Right ventricle myocardium inferior (tissue), 1 donor: ENCODE measurements at regions of chr12 and their contacts with region 1.

Region 1: DNA sequence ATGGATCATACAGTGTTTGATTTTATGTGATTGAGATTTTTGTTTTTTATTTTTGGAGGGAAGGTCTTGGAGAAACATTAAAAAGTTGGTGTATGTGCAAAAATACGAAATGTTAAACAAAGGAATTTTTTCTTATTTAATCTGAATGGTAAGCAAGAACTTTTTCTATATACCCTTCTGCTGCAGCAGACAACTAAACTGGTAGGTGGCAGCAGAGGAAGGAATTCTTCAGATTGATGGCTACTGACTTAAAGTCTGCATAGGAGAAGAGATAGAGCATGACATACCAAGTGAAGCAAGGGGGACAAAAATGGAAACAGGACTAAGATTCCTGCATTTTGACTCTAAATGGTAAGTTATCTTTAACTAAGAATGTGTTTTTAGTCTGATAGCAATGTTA is 42.0 kb upstream of the A2ML1 start:
- DNase-seq: no peak
- ATAC-seq: peak; percentile 54

Region 2: DNA sequence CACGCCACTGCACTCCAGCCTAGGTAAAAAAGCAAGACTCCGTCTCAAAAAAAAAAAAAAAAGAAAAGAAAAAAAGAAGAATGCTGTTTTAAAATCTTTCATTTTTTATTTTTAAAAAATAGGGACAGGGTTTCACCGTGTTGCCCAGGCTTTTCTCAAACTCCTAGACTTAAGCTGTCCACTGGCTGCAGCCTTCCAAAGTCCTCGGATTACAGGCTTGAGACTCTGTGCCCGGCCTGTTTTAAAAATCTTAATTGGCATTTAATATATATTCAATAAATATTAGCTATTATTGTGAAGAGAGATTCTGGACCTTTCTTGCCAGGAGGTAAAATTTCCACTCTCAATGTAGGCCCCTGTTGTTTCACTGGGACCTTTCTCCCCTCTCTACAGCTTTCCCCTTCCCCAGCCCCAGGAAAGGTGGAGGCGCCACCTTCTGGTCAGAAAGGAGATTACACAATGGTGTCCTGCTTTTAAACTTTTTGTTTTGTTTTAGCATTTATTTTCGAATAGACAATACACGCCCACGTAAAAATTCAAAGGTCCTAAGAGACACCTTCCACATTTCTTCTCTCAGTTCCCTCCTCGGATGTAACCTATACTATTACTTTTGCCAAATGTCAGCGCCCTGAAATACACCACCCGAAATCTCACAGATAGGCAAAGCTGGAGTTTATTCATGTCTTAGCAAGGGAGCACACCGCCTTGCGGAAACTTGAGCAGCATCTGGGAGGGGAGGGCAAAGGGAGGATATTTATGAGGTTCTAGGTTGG is 110.1 kb after region 1 on chr12:
- intact Hi-C with region 1: loop called (anchors 2 kb)
- DNase-seq: no peak
- ATAC-seq: peak; percentile 81

Region 3: DNA sequence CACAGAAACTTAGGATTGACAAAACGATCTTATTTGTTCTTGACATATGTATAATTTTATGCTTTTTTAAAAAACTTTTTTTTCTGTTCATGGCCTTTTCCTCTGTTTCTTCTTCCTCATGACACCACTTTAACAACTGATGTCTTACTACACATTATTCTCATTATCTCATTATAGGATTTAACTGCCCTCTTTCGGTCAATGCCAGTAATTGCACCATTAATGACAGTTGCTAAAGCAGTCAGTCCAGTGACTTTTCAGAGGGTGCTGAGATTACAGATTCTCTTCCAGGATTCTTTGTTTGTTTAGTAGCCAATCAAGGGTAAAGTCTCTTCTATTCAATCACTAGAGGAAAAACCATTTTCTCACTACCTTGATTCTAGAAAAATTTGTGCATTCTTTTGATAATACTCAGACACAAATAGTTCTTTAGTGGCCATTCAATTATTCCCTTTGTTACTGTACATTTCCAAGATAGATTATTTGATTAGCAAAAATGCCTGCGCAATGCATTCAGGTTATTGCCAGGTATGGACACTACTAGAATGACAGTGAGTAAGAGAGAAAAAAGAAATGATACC is 259.1 kb after region 1 on chr12:
- intact Hi-C with region 1: loop called (anchors 2 kb)
- DNase-seq: no peak
- ATAC-seq: no peak